H1 (cell line): ENCODE measurements at regions of chr14 and their contacts with region 1.

Region 1: GRCh38 chr14:67526676-67527459 is 6.2 kb upstream of the PLEKHH1 start:
- DNase-seq: peak in 1 of 2 experiments; percentile 66
- H3K4me3 ChIP-seq: no peak overlapping the region
- H3K27ac ChIP-seq: no peak overlapping the region
- H3K4me1 ChIP-seq: no peaks in the 10 kb centered on the region; a peak in 1 of 7 replicates
- H3K27me3 ChIP-seq: no peaks in the 10 kb centered on the region
- CTCF ChIP-seq: peak; percentile 58 to 82 (median 80)
- EP300 ChIP-seq: no peak
- POLR2A ChIP-seq: no peak
- RAD21 ChIP-seq: peak; percentile 87 to 89

Region 2: GRCh38 chr14:67446120-67447032 is 80.5 kb before region 1 on chr14:
- CTCF ChIA-PET with region 1: interaction called, 15 read pairs
- POLR2A ChIA-PET with region 1: no interaction called
- DNase-seq: no peak
- H3K4me3 ChIP-seq: no peak overlapping the region
- H3K27ac ChIP-seq: no peak overlapping the region
- H3K4me1 ChIP-seq: peaks cover 0 to 22% (median 10%) of the 10 kb centered on the region in 4 experiments; a peak in 6 of 7 replicates
- H3K27me3 ChIP-seq: no peaks in the 10 kb centered on the region; a peak in 1 of 7 replicates
- CTCF ChIP-seq: no peak
- EP300 ChIP-seq: no peak
- POLR2A ChIP-seq: no peak
- RAD21 ChIP-seq: no peak

Region 3: GRCh38 chr14:67467179-67468080 is 59.4 kb before region 1 on chr14:
- CTCF ChIA-PET with region 1: interaction called, 14 read pairs
- POLR2A ChIA-PET with region 1: no interaction called
- DNase-seq: no peak
- H3K4me3 ChIP-seq: no peak overlapping the region
- H3K27ac ChIP-seq: no peak overlapping the region
- H3K4me1 ChIP-seq: peaks cover 0 to 2% (median 0%) of the 10 kb centered on the region in 4 experiments; a peak in 1 of 7 replicates
- H3K27me3 ChIP-seq: no peaks in the 10 kb centered on the region; a peak in 1 of 7 replicates
- CTCF ChIP-seq: peak in 2 of 3 experiments; percentile 28 to 52; a peak in 2 of 4 replicates
- EP300 ChIP-seq: no peak
- POLR2A ChIP-seq: no peak
- RAD21 ChIP-seq: no peak; a peak in 1 of 4 replicates

Region 4: DNA sequence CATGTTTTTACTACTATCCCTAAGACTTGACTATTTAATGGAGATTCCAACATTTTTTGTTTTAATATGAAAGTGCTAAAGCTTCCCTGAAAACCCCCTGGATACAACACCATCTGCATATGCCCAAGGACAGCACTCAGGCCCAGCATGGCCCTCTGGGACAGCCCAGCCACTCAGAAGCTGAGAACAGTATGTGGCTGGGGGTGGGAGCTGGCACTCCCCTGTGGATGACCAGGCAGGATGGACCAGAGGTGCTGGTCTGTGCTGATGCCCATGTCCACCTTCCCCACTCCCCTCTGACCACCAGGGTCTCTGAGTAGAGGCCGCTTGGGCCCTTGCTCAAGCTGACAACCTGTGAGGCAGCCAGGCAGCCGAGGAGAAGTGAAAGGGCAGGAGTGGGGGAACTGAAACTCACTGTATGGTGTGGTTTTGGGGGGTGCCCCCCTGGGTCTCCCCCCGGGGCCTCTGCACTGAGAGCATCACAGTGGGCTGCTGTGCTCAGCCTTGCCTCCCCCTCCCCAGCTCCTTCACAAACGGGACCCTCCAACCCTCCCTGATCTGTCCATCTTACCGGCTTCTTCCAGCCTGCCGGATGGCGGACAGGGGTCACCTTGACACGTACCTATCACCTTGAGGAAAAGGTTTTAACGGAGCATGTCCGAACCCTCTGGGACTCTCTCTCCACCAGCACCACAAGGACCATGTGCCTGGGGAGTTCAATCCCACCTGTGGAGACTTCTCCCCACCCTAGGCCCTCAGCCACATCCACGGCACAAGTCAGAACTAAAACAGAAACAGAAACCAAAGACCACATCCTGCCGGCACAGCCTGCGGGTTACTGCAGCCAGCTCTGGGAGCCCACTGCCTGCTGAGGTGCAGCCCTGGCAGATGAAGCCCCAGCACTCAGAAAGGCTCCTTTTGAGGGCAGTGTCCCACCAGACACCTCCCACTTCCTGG is 38.7 kb before region 1 on chr14 and contains the start of gene TMEM229B:
- CTCF ChIA-PET with region 1: interaction called, 23 read pairs
- POLR2A ChIA-PET with region 1: no interaction called
- DNase-seq: no peak
- H3K4me3 ChIP-seq: no peak within 1 kb of the TSS
- H3K27ac ChIP-seq: no peak within 1 kb of the TSS
- H3K4me1 ChIP-seq: peaks cover 0 to 10% (median 5%) of the 10 kb centered on the region in 4 experiments; a peak in 4 of 7 replicates
- H3K27me3 ChIP-seq: no peaks in the 10 kb centered on the region
- CTCF ChIP-seq: no peak
- EP300 ChIP-seq: no peak
- POLR2A ChIP-seq: no peak
- RAD21 ChIP-seq: no peak
- total RNA-seq, gene TMEM229B: 0.50 and 0.73 TPM in 2 replicates

Region 5: GRCh38 chr14:67514650-67515385 is 12.1 kb before region 1 on chr14:
- CTCF ChIA-PET with region 1: interaction called, 100 read pairs
- POLR2A ChIA-PET with region 1: interaction called, 29 read pairs
- DNase-seq: peak in 1 of 2 experiments; percentile 77
- H3K4me3 ChIP-seq: peak overlapping the region; percentile 42 to 85 (median 46)
- H3K27ac ChIP-seq: no peak overlapping the region
- H3K4me1 ChIP-seq: peaks cover 2 to 8% (median 3%) of the 10 kb centered on the region in 4 experiments; a peak in 4 of 7 replicates
- H3K27me3 ChIP-seq: peaks cover 7 to 49% (median 32%) of the 10 kb centered on the region in 4 experiments
- CTCF ChIP-seq: no peak
- EP300 ChIP-seq: no peak
- POLR2A ChIP-seq: no peak
- RAD21 ChIP-seq: no peak

Region 6: DNA sequence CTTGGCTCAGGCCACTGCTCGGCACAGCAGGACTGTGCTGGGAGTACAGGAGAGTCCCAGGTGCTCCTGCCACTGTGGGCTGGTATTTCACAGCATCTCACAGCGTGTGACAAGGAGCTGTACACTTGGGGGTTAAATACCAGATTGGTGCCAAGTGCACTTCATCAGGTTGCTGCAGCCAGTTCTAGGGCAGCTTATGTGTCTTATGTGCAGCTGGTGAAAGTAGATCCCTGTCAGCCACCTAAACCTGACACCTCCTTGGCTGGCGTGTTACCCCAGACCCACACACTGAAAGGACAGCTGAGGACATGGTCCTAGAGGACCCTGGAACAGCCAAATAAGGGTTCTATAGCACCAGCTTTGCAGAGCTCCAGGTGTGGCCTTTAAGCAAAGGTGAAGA is 25.1 kb after region 1 on chr14:
- CTCF ChIA-PET with region 1: interaction called, 22 read pairs
- POLR2A ChIA-PET with region 1: no interaction called
- DNase-seq: no peak
- H3K4me3 ChIP-seq: no peak overlapping the region
- H3K27ac ChIP-seq: no peak overlapping the region
- H3K4me1 ChIP-seq: no peaks in the 10 kb centered on the region
- H3K27me3 ChIP-seq: no peaks in the 10 kb centered on the region
- CTCF ChIP-seq: no peak
- EP300 ChIP-seq: no peak
- POLR2A ChIP-seq: no peak
- RAD21 ChIP-seq: no peak

Region 7: GRCh38 chr14:67599698-67600561 is 73.1 kb after region 1 on chr14 and contains the start of gene PIGH:
- CTCF ChIA-PET with region 1: interaction called, 15 read pairs
- POLR2A ChIA-PET with region 1: no interaction called
- DNase-seq: peak; percentile 46 to 95
- H3K4me3 ChIP-seq: peak within 1 kb of the TSS; percentile 60 to 79 (median 70)
- H3K27ac ChIP-seq: no peak within 1 kb of the TSS
- H3K4me1 ChIP-seq: no peaks in the 10 kb centered on the region; a peak in 1 of 7 replicates
- H3K27me3 ChIP-seq: peaks cover 4 to 41% (median 22%) of the 10 kb centered on the region in 4 experiments
- CTCF ChIP-seq: peak; percentile 53 to 97 (median 66)
- EP300 ChIP-seq: no peak
- POLR2A ChIP-seq: peak in 1 of 2 experiments; percentile 59; a peak in 2 of 3 replicates
- RAD21 ChIP-seq: peak; percentile 37 to 51; a peak in 3 of 4 replicates
- total RNA-seq, gene PIGH: 6.2 and 7.2 TPM in 2 replicates